Activated CD4-positive, alpha-beta memory T cell treated with anti-CD3 and anti-CD28 coated beads for 36 hours (primary cell): ENCODE measurements at regions of chr9 and their contacts with region 1.

Region 1: GRCh38 chr9:35603987-35604577 is 980 bp upstream of the TESK1 start:
- DNase-seq: peak; percentile 100
- H3K4me3 Mint-ChIP-seq: peak overlapping the region; percentile 97
- H3K27ac Mint-ChIP-seq: peak overlapping the region; percentile 98
- H3K4me1 Mint-ChIP-seq: peaks cover 29% of the 10 kb centered on the region
- H3K27me3 Mint-ChIP-seq: no peaks in the 10 kb centered on the region

Region 2: DNA sequence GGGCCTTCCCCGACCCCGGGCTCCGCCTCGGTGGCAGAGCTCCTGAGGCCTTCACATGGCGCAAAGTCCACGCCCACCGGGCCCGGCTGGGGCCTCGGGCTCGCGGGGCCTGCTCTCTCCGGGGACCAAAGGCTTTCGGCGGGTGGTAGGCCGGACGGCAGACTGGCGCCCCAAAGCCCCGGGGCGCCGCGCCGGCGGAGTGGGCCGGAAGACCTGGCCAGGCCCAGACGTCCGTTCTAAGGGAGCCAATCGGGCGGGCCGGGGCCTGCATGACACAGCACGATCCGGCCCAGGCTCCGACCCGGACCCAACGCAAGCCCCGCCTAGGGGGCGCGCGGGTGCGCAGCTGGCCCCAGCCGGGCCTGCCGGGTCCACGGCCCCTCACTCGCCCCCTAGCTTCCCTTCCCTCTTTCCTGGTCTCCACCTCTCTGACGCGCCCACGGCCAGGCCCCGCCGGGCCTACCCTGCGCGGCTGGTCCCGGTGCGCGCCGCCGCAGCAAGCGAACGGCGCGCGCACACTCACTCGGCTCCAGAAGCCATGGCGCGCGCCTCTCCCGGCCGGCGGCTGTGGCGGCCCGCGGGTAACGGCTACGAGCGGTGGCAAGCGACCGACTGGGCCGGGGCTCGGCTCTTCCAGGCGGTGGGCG is 532.1 kb before region 1 on chr9:
- CTCF ChIA-PET with region 1: interaction called, 3 read pairs
- POLR2A ChIA-PET with region 1: no interaction called
- intact Hi-C with region 1: loop called (anchors 2 kb)
- DNase-seq: peak; percentile 81
- H3K4me3 Mint-ChIP-seq: peak overlapping the region; percentile 92
- H3K27ac Mint-ChIP-seq: peak overlapping the region; percentile 99
- H3K4me1 Mint-ChIP-seq: peaks cover 54% of the 10 kb centered on the region
- H3K27me3 Mint-ChIP-seq: peaks cover 2% of the 10 kb centered on the region

Region 3: DNA sequence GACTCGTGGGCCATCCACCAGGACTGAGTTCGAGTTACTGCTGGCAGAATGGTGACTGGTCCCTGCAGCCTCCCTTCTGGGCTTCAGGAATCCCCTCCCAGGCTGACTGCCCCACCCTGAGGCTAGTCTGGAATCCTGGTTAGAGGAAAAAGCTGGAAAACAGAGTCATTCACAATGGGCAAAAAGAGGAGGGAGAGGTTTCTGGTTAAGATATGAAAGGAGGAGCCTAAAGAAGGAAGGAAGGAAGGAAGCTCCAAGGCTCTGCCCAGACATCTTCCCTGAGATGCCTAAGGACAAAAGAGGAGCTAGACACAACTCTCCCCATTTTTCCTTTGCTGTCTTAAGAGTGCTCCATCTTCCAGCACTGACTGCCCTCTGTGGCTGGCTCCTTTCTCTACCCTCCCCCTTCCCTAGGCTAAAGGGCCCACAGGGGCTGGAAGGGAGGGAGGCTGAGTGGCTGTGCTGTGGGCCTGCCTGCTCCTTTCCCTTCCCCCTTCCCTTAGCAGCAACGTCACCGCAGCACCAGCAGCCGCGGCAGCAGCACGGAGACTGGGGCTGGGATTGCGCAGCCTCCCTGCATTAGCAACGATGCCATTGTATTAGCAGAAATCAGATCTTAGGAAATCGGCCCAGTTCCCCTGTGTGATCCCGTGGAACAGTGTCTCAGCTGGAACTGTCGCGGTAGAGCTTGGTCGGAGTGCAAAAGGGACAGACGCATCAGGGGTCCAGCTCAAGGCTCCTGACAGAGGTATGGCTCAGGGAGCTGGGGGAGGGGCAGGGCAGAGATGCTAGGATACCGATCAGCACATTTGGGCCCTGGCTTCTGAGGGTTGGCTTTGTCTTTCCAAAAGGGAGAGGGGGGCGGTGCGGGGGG is 65.5 kb before region 1 on chr9:
- CTCF ChIA-PET with region 1: no interaction called
- POLR2A ChIA-PET with region 1: no interaction called
- intact Hi-C with region 1: no loop called
- DNase-seq: no peak
- H3K4me3 Mint-ChIP-seq: no peak overlapping the region
- H3K27ac Mint-ChIP-seq: no peak overlapping the region
- H3K4me1 Mint-ChIP-seq: no peaks in the 10 kb centered on the region
- H3K27me3 Mint-ChIP-seq: peaks cover 18% of the 10 kb centered on the region

Region 4: GRCh38 chr9:35579130-35579529 is 25.0 kb before region 1 on chr9:
- CTCF ChIA-PET with region 1: interaction called, 10 read pairs
- POLR2A ChIA-PET with region 1: no interaction called
- intact Hi-C with region 1: no loop called
- DNase-seq: peak; percentile 64
- H3K4me3 Mint-ChIP-seq: no peak overlapping the region
- H3K27ac Mint-ChIP-seq: peak overlapping the region; percentile 82
- H3K4me1 Mint-ChIP-seq: peaks cover 19% of the 10 kb centered on the region
- H3K27me3 Mint-ChIP-seq: no peaks in the 10 kb centered on the region

Region 5: DNA sequence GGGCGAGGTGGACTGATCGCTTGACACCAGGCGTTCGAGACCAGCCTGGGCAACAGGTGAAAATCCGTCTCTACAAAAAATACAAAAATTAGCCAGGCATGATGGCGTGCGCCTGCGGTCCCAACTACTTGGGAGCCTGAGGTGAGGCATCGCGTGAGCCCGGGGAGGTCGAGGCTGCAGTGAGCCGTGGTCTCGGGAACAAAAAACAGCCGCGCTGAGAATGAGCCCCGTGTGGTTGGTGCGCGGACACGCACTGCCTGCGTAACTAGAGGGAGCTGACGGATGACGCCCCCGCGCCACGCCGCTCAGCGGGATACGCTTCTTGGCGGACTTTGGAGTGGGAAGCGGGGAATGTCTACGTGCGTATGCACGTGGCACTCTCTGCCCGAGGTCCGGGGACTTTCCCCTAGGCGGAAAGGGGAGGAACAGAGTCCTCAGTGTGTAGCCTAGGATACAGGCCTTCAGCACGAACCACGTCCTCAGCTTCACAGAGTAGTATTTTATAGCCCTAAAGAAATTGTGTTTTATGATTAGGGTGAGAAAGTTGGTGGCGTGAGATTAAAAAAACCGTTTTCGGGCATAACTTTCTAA is 53.6 kb after region 1 on chr9 and contains the start of gene RMRP:
- CTCF ChIA-PET with region 1: interaction called, 14 read pairs
- POLR2A ChIA-PET with region 1: interaction called, 4 read pairs
- intact Hi-C with region 1: loop called (anchors 2 kb)
- DNase-seq: peak; percentile 96
- H3K4me3 Mint-ChIP-seq: peak within 1 kb of the TSS; percentile 86
- H3K27ac Mint-ChIP-seq: peak within 1 kb of the TSS; percentile 96
- H3K4me1 Mint-ChIP-seq: peaks cover 64% of the 10 kb centered on the region
- H3K27me3 Mint-ChIP-seq: peaks cover 2% of the 10 kb centered on the region
- total RNA-seq, gene RMRP: 10,694 to 13,592 TPM

Region 6: DNA sequence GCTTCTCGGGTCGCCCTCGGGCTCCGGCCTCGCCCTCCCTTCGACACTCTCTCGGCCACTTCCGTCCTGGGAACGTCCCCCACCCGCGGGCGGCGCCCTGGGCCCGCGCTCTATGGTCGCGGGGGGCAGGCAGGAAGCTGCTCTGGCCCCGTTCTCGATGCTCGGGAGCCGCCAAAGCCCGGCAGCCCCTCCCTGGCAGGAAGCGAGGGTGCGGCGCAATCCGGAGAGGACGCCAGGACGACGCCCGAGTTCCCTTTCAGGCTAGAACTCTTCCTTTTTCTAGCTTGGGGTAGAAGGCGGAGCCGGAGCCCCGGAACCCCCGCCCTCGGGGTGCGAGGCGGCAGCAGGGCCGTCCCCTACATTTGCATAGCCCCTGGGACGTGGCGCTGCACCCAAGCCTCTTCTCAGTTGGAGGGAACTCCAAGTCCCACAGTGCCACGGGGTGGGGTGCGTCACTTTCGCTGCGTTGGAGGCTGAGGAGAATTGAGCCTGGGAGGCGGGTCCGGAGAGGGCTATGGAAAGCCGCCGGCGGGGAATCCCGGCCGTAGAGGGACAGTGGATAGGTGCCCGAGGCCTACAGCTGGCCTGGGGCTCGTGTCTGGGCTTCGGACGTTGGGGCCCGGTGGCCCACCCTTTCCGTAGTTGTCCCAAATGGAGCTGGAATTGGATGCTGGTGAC is 128.2 kb after region 1 on chr9 and contains the starts of genes CREB3 and TLN1:
- CTCF ChIA-PET with region 1: interaction called, 7 read pairs
- POLR2A ChIA-PET with region 1: interaction called, 7 read pairs
- intact Hi-C with region 1: loop called (anchors 1 kb)
- DNase-seq: peak; percentile 99
- H3K4me3 Mint-ChIP-seq: no peak within 1 kb of the TSS
- H3K27ac Mint-ChIP-seq: no peak within 1 kb of the TSS
- H3K4me1 Mint-ChIP-seq: peaks cover 22% of the 10 kb centered on the region
- H3K27me3 Mint-ChIP-seq: no peaks in the 10 kb centered on the region
- total RNA-seq, gene CREB3: 27.7 to 29.9 TPM
- total RNA-seq, gene TLN1: 285 to 287 TPM

Region 7: GRCh38 chr9:35882263-35882848 is 278.3 kb after region 1 on chr9:
- CTCF ChIA-PET with region 1: no interaction called
- POLR2A ChIA-PET with region 1: no interaction called
- intact Hi-C with region 1: loop called (anchors 10 kb)
- DNase-seq: peak; percentile 84
- H3K4me3 Mint-ChIP-seq: no peak overlapping the region
- H3K27ac Mint-ChIP-seq: no peak overlapping the region
- H3K4me1 Mint-ChIP-seq: no peaks in the 10 kb centered on the region
- H3K27me3 Mint-ChIP-seq: no peaks in the 10 kb centered on the region